ENCODE measurements at regions of chr5 and their contacts with region 1.

Region 1: GRCh38 chr5:73591102-73591695 is 25.7 kb downstream of the UTP15 start:
- DNase-seq: peak; percentile 13
- H3K4me3 Mint-ChIP-seq: no peak overlapping the region
- H3K27ac Mint-ChIP-seq: no peak overlapping the region
- H3K4me1 Mint-ChIP-seq: no peaks in the 10 kb centered on the region
- H3K27me3 Mint-ChIP-seq: peaks cover 2% of the 10 kb centered on the region

Region 2: DNA sequence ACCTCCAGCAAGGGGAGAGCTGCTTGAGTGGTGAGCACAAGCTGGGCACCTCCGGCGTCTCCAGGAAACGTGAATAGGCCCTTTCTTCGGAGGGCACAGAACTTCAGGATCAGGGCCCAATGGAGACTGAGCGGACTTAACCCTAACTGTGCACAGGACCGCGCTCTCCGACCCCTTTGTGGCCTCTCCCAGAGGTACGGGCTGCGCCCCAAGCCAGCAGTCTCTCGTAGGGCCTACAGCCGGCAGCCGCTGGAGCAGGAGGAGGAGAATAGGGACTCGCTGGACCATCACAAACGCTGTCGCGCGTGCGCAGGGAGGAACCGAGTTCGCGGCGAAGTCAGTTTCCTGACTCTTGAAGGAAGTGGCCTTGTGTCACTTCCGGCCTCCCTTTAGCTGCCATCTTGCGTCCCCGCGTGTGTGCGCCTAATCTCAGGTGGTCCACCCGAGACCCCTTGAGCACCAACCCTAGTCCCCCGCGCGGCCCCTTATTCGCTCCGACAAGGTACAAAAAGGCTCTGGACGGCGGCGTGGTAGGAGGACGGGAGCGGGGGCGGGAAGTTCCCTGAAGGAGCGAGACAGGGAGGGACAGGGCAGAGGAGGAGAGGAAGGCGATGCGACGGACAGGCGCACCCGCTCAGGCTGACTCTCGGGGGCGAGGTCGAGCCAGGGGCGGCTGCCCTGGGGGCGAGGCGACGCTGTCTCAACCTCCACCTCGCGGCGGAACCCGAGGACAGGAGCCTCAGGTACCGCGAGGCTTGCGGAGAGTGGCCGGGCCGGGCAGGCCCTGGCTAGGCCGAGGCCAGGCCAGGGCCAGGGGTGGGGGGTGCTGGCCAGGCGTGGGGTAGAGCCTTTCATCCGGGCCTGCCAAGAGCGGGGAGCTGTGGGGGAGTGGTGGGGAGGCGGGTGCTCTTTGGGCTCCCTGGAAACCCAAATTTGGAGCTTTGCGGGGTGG is 92.9 kb before region 1 on chr5 and contains the start of gene BTF3:
- CTCF ChIA-PET with region 1: no interaction called
- POLR2A ChIA-PET with region 1: no interaction called
- intact Hi-C with region 1: no loop called
- DNase-seq: peak; percentile 95
- H3K4me3 Mint-ChIP-seq: peak within 1 kb of the TSS; percentile 98
- H3K27ac Mint-ChIP-seq: peak within 1 kb of the TSS; percentile 97
- H3K4me1 Mint-ChIP-seq: peaks cover 37% of the 10 kb centered on the region
- H3K27me3 Mint-ChIP-seq: peaks cover 2% of the 10 kb centered on the region
- total RNA-seq, gene BTF3: 936 to 944 TPM

Region 3: DNA sequence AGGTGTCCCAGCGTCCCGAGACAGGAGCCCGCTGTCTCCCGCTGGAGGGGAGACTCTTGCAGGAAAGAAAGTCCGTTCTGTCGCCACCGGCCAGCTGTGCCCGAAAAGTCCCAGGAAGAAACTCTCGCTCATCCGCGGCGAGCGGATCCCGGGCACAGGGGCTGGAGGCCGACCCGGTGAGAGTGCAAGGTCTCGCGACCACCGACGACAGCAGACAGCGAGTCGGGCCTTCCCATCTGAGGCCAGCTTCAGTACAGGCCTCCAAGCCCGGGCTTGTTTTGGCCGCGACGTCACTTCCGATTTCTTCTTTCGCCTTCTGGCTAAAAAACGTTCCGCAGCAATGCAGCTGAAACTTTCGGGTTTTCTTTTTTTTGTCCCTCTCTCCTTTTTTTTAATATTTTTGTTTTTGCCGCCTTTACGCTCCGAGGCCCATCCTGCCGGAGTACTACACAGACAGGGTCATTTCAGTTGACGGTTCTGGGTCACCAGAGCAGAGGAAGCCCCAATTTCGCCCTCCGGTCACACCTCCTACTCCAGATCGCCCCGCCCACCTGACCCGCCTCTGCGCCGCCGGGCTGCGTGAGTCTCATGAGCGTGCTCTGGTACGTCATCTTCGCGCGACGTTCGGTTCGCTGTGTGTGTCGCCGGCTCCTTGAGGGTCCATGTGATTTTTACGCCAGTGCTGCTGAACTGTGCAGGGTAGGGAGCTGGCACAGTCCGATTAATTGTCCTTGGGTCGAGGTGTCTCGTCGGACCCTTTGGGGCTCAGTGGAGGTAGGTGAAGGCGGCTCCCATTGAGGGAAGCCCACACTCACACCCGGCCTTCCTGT is 25.8 kb before region 1 on chr5 and contains the starts of genes ANKRA2 and UTP15:
- CTCF ChIA-PET with region 1: interaction called, 14 read pairs
- POLR2A ChIA-PET with region 1: no interaction called
- intact Hi-C with region 1: no loop called
- DNase-seq: peak; percentile 99
- H3K4me3 Mint-ChIP-seq: peak within 1 kb of the TSS; percentile 92
- H3K27ac Mint-ChIP-seq: peak within 1 kb of the TSS; percentile 92
- H3K4me1 Mint-ChIP-seq: peaks cover 33% of the 10 kb centered on the region
- H3K27me3 Mint-ChIP-seq: no peaks in the 10 kb centered on the region
- total RNA-seq, gene ANKRA2: 19.1 to 21.0 TPM
- total RNA-seq, gene UTP15: 29.7 to 33.1 TPM

Region 4: GRCh38 chr5:73693481-73694061 is 102.4 kb after region 1 on chr5:
- CTCF ChIA-PET with region 1: interaction called, 14 read pairs
- POLR2A ChIA-PET with region 1: no interaction called
- intact Hi-C with region 1: no loop called
- DNase-seq: peak; percentile 10
- H3K4me3 Mint-ChIP-seq: no peak overlapping the region
- H3K27ac Mint-ChIP-seq: no peak overlapping the region
- H3K4me1 Mint-ChIP-seq: peaks cover 17% of the 10 kb centered on the region
- H3K27me3 Mint-ChIP-seq: peaks cover 15% of the 10 kb centered on the region

Region 5: DNA sequence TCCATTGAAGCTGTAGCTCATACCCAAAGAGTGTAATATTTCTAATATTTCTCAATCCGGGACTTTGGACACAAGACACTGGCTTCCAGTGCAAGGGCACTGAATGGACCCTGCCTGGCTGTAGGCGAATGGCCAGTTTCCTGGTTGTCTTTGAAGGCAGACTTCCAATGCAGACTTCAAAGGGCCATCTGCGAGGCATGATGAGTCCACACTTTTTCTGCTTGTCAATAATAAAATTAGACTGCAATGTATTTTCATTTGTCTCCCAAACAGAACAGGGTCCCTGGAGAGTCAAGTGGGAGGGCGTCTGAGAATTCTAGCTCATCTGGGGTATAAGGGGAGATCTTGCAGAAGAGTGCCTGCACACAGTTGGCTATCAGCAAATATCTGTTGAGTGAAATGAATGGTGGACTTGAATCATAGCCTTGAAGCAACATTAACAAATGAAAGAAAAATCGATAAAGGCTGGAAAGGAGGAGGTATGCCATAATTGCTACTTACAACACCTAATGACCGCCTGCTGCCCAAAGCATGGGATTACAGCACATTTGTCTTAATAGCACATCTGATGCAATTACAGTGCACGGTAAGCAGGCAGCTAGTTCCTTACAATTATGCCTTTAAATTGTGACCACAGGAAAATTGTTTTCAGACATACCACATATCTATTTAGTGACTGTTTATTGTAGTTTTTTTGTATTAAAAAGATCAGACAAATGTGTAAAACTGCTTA is 172.3 kb after region 1 on chr5:
- CTCF ChIA-PET with region 1: no interaction called
- POLR2A ChIA-PET with region 1: no interaction called
- intact Hi-C with region 1: no loop called
- DNase-seq: no peak
- H3K4me3 Mint-ChIP-seq: no peak overlapping the region
- H3K27ac Mint-ChIP-seq: no peak overlapping the region
- H3K4me1 Mint-ChIP-seq: no peaks in the 10 kb centered on the region
- H3K27me3 Mint-ChIP-seq: peaks cover 1% of the 10 kb centered on the region

Measured in activated CD4-positive, alpha-beta memory T cell treated with anti-CD3 and anti-CD28 coated beads for 36 hours (primary cell).